ENCODE measurements at regions of chrX and their contacts with region 1.

Region 1: GRCh38 chrX:7362111-7362510 is 214.2 kb upstream of the PUDP start:
- DNase-seq: no peak

Region 2: GRCh38 chrX:6917666-6918065 is 444.4 kb before region 1 on chrX:
- intact Hi-C with region 1: no loop called
- DNase-seq: no peak

Region 3: DNA sequence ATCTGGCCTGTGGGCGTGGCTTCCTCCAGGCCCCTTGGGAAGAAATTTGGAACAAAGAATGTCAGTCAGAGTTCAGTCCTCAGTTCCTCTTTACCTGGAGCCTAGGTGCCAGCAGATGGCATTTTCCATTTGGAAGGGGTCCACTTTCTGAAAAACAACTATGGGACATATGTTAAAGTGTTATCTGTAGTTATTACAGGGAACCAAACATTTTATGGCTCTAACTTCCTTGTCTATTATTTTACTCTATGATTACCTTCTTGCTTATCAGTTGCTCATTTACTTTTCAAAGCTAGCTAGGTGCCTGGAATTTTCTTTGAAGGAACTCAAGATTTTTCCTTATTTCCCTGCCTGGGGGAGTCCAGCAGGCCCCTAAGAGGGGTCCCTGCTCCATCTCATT is 54.4 kb before region 1 on chrX:
- intact Hi-C with region 1: loop called (anchors 10 kb)
- DNase-seq: no peak

Region 4: DNA sequence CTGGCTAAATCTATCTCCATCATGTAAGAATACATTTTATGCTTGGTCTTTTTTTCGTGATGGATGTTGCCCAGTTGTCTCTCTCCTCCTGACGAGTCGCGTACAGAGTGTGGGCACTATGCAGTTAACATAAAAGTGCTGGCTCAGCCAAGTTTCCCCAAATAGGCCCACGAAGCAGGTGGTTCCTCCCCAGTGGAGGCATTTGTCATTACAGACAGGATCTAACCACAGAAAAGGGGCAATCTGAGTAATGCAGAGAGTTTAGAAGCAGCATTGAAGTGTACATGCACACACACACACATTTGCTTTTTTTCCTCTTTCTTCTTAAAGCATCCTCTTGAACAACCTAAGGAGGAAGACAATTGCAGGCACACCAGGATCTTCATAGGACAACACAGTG is 292.2 kb after region 1 on chrX:
- intact Hi-C with region 1: no loop called
- DNase-seq: no peak

Measured in posterior cingulate gyrus (tissue), 11 donors.